ENCODE measurements at regions of chr1 and their contacts with region 1.

Region 1: DNA sequence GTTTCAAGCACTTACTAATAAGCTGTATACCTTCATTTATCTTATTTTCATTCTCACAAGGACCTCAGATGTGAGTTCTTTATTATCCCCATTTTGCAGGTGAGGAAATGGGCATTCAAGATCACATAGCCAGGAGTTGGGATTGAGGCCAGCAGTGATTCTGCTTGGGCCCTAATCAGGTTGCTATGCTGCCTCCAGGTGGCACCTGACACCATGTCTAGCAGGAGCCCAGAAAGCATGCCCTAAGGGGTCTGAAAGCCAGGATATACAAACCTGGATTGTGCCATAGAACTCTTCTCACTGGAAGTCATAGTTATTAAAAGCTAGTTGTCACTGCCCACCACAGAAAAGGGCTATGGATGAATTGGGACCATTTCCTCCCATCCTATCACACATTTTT is 61.1 kb downstream of the FYB2 start:
- DNase-seq: peak; percentile 49 to 57
- H3K4me3 ChIP-seq: no peak overlapping the region
- H3K4me3 Mint-ChIP-seq: no peak overlapping the region
- H3K27ac Mint-ChIP-seq: no peak overlapping the region
- H3K4me1 ChIP-seq: peaks cover 11% of the 10 kb centered on the region; the same call in 1 of the 2 replicates
- H3K4me1 Mint-ChIP-seq: peaks cover 6% of the 10 kb centered on the region
- H3K27me3 ChIP-seq: no peaks in the 10 kb centered on the region
- H3K27me3 Mint-ChIP-seq: no peaks in the 10 kb centered on the region
- CTCF ChIP-seq: peak; percentile 21 to 24

Region 2: GRCh38 chr1:56639210-56639609 is 118.9 kb before region 1 on chr1:
- CTCF ChIA-PET with region 1: no interaction called
- POLR2A ChIA-PET with region 1: no interaction called
- intact Hi-C with region 1: no loop called
- DNase-seq: no peak
- H3K4me3 ChIP-seq: no peak overlapping the region
- H3K4me3 Mint-ChIP-seq: no peak overlapping the region
- H3K27ac Mint-ChIP-seq: no peak overlapping the region
- H3K4me1 ChIP-seq: peaks cover 6% of the 10 kb centered on the region; the same call in 1 of the 2 replicates
- H3K4me1 Mint-ChIP-seq: no peaks in the 10 kb centered on the region
- H3K27me3 ChIP-seq: no peaks in the 10 kb centered on the region
- H3K27me3 Mint-ChIP-seq: no peaks in the 10 kb centered on the region
- CTCF ChIP-seq: no peak

Region 3: DNA sequence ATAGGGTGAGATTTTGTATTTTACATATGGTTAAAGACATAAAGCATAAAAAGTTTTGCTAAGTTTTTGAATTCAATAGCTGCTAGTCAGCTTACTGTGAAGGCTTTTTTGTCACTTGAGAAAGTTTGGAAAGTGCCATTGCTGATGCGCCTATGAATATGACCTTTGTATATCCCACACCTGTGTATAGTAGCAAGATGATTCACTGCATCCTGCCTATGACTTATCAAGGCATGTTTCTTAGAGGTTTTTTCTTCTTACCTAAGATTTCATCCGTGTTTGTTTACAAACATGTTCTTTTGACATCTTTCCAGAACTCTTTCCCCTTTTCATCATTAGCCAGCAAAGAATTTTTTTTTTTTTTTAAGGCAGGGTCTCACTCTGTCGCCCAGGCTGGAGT is 61.5 kb before region 1 on chr1:
- CTCF ChIA-PET with region 1: no interaction called
- POLR2A ChIA-PET with region 1: no interaction called
- intact Hi-C with region 1: no loop called
- DNase-seq: no peak
- H3K4me3 ChIP-seq: no peak overlapping the region
- H3K4me3 Mint-ChIP-seq: no peak overlapping the region
- H3K27ac Mint-ChIP-seq: no peak overlapping the region
- H3K4me1 ChIP-seq: no peaks in the 10 kb centered on the region
- H3K4me1 Mint-ChIP-seq: no peaks in the 10 kb centered on the region
- H3K27me3 ChIP-seq: no peaks in the 10 kb centered on the region
- H3K27me3 Mint-ChIP-seq: no peaks in the 10 kb centered on the region
- CTCF ChIP-seq: no peak

Region 4: GRCh38 chr1:56803561-56804156 is 45.5 kb after region 1 on chr1:
- CTCF ChIA-PET with region 1: interaction called, 7 read pairs
- POLR2A ChIA-PET with region 1: no interaction called
- intact Hi-C with region 1: loop called (anchors 5 kb)
- DNase-seq: peak; percentile 59 to 62
- H3K4me3 ChIP-seq: no peak overlapping the region
- H3K4me3 Mint-ChIP-seq: no peak overlapping the region
- H3K27ac Mint-ChIP-seq: no peak overlapping the region
- H3K4me1 ChIP-seq: no peaks in the 10 kb centered on the region; the same call in 1 of the 2 replicates
- H3K4me1 Mint-ChIP-seq: no peaks in the 10 kb centered on the region
- H3K27me3 ChIP-seq: no peaks in the 10 kb centered on the region
- H3K27me3 Mint-ChIP-seq: no peaks in the 10 kb centered on the region
- CTCF ChIP-seq: peak; percentile 52 to 67

Region 5: DNA sequence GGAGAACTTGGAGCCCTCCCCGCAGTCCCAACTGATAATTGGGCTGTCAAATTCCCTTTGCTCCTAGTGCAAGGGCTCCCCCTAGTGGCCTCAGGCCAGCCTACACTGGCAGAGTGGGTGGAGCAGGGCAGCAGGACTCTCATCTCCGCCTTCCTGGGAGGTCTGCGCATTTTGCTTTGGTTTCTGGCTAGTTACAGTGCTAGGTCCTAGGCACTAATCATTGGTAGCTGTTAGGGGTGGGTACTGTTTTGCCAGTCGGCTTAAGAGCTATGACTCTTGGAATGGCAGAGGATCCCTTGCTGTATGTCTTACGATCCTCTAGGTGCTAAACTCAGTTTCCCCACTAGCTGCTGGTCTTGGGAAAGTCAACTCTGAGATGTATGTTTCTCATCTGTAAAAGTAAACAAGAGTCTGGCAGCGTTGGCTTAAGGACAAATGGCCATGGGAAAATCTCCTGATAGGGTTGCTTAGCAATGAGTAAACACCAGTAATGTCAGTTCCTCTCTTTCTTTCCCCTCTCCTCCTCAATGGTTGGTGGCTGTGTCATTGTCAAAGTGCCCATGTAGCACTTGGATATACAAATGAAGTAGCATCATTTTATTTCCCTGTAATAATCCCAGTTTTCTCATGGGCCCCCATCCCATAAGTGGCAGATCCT is 63.1 kb after region 1 on chr1:
- CTCF ChIA-PET with region 1: no interaction called
- POLR2A ChIA-PET with region 1: no interaction called
- intact Hi-C with region 1: loop called (anchors 1 kb)
- DNase-seq: peak; percentile 82 to 86
- H3K4me3 ChIP-seq: no peak overlapping the region
- H3K4me3 Mint-ChIP-seq: no peak overlapping the region
- H3K27ac Mint-ChIP-seq: no peak overlapping the region
- H3K4me1 ChIP-seq: peaks cover 39% of the 10 kb centered on the region
- H3K4me1 Mint-ChIP-seq: peaks cover 24% of the 10 kb centered on the region
- H3K27me3 ChIP-seq: no peaks in the 10 kb centered on the region
- H3K27me3 Mint-ChIP-seq: no peaks in the 10 kb centered on the region
- CTCF ChIP-seq: peak; percentile 73 to 78

Region 6: GRCh38 chr1:56849750-56850149 is 91.6 kb after region 1 on chr1:
- CTCF ChIA-PET with region 1: no interaction called
- POLR2A ChIA-PET with region 1: no interaction called
- intact Hi-C with region 1: no loop called
- DNase-seq: no peak
- H3K4me3 ChIP-seq: no peak overlapping the region
- H3K4me3 Mint-ChIP-seq: no peak overlapping the region
- H3K27ac Mint-ChIP-seq: no peak overlapping the region
- H3K4me1 ChIP-seq: no peaks in the 10 kb centered on the region; the same call in 1 of the 2 replicates
- H3K4me1 Mint-ChIP-seq: peaks cover 10% of the 10 kb centered on the region
- H3K27me3 ChIP-seq: no peaks in the 10 kb centered on the region
- H3K27me3 Mint-ChIP-seq: no peaks in the 10 kb centered on the region
- CTCF ChIP-seq: no peak

Region 7: GRCh38 chr1:56864430-56864829 is 106.3 kb after region 1 on chr1:
- CTCF ChIA-PET with region 1: no interaction called
- POLR2A ChIA-PET with region 1: no interaction called
- intact Hi-C with region 1: no loop called
- DNase-seq: no peak
- H3K4me3 ChIP-seq: no peak overlapping the region
- H3K4me3 Mint-ChIP-seq: no peak overlapping the region
- H3K27ac Mint-ChIP-seq: no peak overlapping the region
- H3K4me1 ChIP-seq: no peaks in the 10 kb centered on the region
- H3K4me1 Mint-ChIP-seq: no peaks in the 10 kb centered on the region
- H3K27me3 ChIP-seq: no peaks in the 10 kb centered on the region
- H3K27me3 Mint-ChIP-seq: no peaks in the 10 kb centered on the region
- CTCF ChIP-seq: no peak

Measured in Caco-2 (cell line).